Testis (tissue), 5 donors: ENCODE measurements at regions of chr6 and their contacts with region 1.

Region 1: DNA sequence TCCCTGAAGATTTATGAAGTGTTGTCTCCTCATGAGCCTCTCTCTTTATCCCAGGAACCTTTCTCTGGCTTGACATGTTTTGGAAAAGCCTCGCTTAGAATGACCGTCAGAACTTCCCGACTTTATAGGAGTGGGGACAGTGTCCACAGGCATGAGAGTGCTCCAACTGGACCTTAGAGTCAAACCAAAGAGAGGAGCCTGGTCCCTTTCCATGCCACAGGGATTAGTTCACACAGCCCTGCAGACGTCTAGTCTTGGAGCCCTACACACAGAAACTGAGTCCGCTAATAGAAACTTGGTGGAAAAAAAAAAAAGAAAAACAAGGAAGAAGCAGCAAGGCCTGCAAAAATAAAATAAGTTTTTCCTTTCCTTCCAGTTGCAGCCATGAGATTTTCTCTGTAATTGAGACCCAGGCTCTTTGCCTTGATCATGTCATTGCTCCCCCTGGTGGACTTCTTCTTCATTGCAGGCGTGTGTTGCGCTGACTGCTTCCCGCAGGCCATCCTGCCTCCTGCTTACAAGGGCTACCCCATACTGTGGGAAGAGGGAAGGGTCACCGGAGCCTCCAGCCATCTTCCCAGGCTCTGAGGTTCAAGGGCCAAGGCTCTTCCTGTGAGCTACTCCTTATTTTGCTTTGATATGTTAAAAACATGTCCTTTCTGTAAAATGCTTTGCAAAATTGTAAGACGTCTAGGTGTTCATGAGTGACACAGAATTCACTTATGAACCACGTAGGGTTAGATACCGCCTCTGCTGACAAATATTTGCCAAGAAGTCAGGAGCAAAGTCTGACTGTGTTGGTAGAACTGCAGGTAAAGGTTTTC is 201.0 kb downstream of the UST start:
- DNase-seq: peak; percentile 94
- H3K4me3 ChIP-seq: no peak overlapping the region
- H3K27ac ChIP-seq: no peak overlapping the region
- H3K4me1 ChIP-seq: no peaks in the 10 kb centered on the region
- H3K27me3 ChIP-seq: no peaks in the 10 kb centered on the region
- CTCF ChIP-seq: peak; percentile 77 to 87 (median 85)
- POLR2A ChIP-seq: no peak

Region 2: GRCh38 chr6:148746363-148747144 is 201.3 kb before region 1 on chr6 and contains the start of gene UST:
- intact Hi-C with region 1: loop called (anchors 10 kb)
- DNase-seq: peak; percentile 89
- H3K4me3 ChIP-seq: peak within 1 kb of the TSS; percentile 72 to 88
- H3K27ac ChIP-seq: peak within 1 kb of the TSS; percentile 85 to 92
- H3K4me1 ChIP-seq: peaks cover 7% of the 10 kb centered on the region
- H3K27me3 ChIP-seq: no peaks in the 10 kb centered on the region
- CTCF ChIP-seq: peak in 2 of 3 experiments; percentile 15 to 36
- POLR2A ChIP-seq: peak; percentile 33
- total RNA-seq, gene UST: 14.9 to 16.0 TPM

Region 3: DNA sequence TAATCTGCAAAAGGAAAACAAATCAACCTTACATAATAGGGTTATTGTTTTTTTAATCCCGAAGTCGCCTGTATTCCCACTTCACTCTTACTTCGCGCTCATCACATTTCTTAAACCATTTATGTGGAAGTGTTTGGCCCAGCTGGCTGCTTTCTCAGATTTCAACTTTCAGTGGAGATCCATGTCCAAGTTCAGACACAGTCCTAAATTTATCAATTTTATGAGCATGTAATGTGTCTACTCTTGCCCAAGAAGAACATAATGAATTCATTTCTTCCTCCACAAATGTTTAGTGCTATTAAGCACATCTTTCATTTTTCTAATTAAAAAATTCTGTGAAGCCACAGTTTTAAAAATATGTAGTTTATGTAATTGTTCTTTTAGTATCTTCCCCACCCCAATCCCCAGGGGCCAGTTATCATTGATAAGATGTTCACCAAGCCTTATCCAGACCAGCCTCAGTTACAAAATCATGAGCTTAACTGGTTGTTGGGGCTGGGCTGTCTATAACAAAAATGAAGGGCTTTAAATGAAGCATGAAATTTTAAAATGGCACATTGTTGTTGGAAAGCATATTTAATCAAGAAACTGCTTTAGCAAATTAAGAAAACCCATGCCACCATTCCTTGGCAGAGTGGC is 49.3 kb before region 1 on chr6:
- intact Hi-C with region 1: no loop called
- DNase-seq: peak; percentile 56
- H3K4me3 ChIP-seq: no peak overlapping the region
- H3K27ac ChIP-seq: no peak overlapping the region
- H3K4me1 ChIP-seq: no peaks in the 10 kb centered on the region
- H3K27me3 ChIP-seq: no peaks in the 10 kb centered on the region
- CTCF ChIP-seq: no peak
- POLR2A ChIP-seq: no peak